BJ (cell line): ENCODE measurements at regions of chr18 and their contacts with region 1.

Region 1: DNA sequence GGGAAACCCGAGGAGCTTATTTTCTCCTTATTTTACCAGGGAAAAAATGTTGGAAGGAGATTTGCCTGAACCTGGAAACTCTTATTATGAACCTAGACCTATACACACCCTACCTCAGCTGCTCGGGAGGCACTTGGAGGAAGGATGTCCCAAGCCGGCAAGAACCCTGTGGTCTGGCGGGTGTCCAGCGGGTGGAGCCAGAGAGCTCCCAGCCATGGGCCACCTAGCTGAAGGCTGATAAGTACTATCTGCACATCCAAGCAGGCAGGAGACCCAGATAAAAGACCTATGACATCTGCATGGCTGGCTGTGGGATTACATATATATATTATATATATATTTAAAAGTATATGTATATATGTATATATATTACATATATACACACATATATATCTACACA is 1.1 kb upstream of the SLC14A1 start:
- DNase-seq: no peak
- H3K4me3 ChIP-seq: no peak overlapping the region
- H3K27me3 ChIP-seq: 0 out of 2 replicates have a peak, but pooled peaks cover 2% of the 10 kb centered on the region
- CTCF ChIP-seq: peak; percentile 87

Region 2: DNA sequence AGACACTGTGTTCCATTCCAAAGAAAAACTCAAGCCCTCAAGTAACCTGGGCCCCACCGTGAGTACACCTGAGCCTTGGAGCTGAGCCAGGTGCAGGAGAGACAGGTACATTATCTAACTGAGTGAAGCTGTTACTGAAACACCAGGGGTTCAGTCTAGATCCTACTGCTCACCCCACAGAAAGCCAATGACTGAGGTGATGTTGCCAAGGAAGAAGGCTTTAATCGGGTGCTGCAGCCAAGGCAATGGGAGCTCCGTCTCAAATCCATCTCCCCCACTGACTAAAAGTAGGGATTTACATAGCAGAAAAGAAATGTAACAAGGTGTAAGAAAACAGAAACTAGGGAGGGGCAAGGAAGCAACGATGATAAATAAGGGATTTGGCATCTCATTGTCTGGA is 14.1 kb before region 1 on chr18:
- CTCF ChIA-PET with region 1: interaction called, 16 read pairs
- POLR2A ChIA-PET with region 1: no interaction called
- DNase-seq: no peak
- H3K4me3 ChIP-seq: no peak overlapping the region
- H3K27me3 ChIP-seq: no peaks in the 10 kb centered on the region; the same call in 1 of the 2 replicates
- CTCF ChIP-seq: no peak

Region 3: GRCh38 chr18:45793306-45793965 is 70.5 kb after region 1 on chr18:
- CTCF ChIA-PET with region 1: no interaction called
- POLR2A ChIA-PET with region 1: no interaction called
- DNase-seq: peak; percentile 87
- H3K4me3 ChIP-seq: no peak overlapping the region
- H3K27me3 ChIP-seq: no peaks in the 10 kb centered on the region
- CTCF ChIP-seq: no peak

Region 4: DNA sequence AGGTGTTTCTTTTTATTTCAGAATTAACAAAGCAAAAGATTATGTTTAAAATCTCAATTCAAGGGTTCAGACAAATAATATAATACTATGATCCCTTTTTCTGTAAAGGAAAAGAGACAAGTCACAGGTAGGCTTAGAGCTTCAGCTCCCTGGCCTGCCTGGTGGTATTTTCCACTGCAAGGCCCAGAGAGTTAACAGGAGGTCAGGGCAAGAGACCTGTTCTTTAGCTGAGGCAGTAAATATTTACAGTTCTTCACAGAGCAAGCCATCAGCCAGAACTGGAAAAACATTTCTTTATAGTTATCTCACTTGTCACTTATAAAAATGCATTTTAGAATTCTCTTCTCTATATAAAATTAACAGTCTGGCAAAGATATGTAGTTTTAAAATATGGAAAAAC is 174.1 kb after region 1 on chr18:
- CTCF ChIA-PET with region 1: no interaction called
- POLR2A ChIA-PET with region 1: no interaction called
- DNase-seq: no peak
- H3K4me3 ChIP-seq: no peak overlapping the region
- H3K27me3 ChIP-seq: no peaks in the 10 kb centered on the region
- CTCF ChIP-seq: no peak

Region 5: GRCh38 chr18:46953195-46953594 is 1230.3 kb after region 1 on chr18:
- CTCF ChIA-PET with region 1: no interaction called
- POLR2A ChIA-PET with region 1: no interaction called
- DNase-seq: no peak
- H3K4me3 ChIP-seq: no peak overlapping the region
- H3K27me3 ChIP-seq: no peaks in the 10 kb centered on the region
- CTCF ChIP-seq: no peak